ENCODE measurements at regions of chr21 and their contacts with region 1.

Region 1: DNA sequence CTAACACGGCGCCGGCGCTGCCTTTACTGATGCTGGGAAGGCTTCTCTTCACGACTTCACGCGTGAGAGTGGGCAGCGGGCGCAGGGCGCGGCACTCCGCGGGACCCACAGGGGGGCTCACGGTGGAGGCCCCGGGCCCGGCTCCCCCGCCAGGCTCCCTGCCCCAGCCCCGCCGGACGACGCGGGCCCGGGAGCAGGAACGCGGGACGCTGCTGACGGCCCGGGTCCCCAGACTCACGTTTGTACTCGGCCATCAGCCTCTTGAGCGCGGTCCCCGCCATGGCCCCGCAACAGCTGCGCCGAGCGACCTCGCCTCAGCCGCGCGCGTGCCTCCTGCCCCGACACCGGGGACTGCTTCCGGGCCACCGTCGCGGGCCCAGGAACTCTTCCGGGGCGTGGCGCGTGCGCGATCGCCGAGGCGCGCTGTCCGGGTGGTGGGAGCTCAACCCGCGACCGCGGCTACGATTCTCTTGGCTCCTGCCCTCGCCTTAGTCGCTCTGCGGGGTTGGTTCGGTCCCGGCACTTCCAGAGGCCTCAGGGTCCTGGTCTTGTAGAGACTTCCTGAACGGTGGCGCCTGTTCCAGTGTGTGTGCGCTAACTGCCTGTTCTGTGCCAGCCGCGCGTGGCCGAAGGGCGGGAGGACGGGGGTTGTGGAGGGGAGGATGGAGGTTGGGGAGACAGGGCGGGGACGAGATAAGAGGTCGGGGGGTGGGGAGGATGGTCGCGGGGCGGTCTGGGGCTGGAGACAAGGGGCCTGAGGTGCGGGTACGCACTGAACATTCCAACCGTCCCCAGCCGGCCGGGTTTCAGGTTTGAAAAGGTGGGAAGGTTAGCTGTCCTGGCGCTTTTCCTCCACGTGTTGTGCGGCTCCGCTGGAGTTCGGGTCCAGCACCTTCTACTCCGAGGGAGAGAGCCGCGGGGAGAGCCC is at the start of gene UBE2G2:
- DNase-seq: peak; percentile 79 to 95 (median 88)
- ATAC-seq: peak; percentile 95
- H3K4me3 ChIP-seq: peak within 1 kb of the TSS; percentile 92
- H3K4me3 Mint-ChIP-seq: peak within 1 kb of the TSS; percentile 88 to 100 (median 96)
- H3K27ac ChIP-seq: peak within 1 kb of the TSS; percentile 85
- H3K27ac Mint-ChIP-seq: peak within 1 kb of the TSS; percentile 85 to 99 (median 94)
- H3K4me1 ChIP-seq: peaks cover 19 to 27% of the 10 kb centered on the region in 2 donors
- H3K4me1 Mint-ChIP-seq: peaks cover 24 to 53% (median 45%) of the 10 kb centered on the region in 7 donors
- H3K27me3 ChIP-seq: no peaks in the 10 kb centered on the region
- H3K27me3 Mint-ChIP-seq: no peaks in the 10 kb centered on the region
- total RNA-seq, gene UBE2G2: 108 to 150 (median 129) TPM

Region 2: DNA sequence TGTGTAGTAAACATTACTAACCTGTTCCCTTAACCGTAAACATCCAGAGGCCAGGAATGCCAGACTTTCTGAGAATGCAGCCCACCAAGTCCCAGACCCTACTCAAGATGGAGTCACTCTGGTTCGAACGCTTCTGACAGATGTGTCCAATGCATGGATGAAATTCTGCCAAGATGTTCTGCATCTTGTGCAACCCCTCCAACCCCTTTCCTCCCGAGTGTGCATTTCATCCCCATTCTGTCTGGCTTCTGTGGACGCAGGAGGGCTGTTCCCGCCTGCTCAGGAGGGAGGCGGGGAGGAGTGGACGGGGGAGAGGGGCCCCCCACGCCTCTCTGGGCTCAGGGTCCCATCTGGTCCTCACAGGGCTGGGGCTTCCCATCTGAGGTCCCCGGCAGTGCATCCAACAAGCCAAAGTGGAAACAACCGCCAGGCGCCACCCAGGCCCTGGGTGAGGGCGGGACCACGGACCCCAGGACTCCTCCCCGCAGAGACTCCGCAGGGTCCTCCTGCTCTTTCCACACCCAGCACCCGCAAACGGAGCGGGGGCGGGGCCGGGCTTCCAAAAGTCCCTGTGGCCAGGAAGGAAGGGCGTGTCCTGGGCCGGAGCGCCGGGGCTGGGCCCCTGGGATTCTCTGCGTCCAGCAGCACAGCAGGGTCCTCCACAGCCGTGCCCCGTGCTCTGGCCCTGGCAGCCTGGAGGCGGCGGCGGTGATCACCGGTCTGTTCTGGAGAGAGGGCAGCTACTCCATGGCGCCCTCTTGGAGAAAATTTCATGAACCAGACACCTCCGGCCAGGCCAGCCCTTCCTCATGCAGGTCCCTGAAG is 43.9 kb after region 1 on chr21:
- CTCF ChIA-PET with region 1: interaction called, 4 read pairs
- POLR2A ChIA-PET with region 1: no interaction called
- intact Hi-C with region 1: loop called (anchors 1 kb)
- DNase-seq: peak; percentile 15 to 75 (median 37)
- ATAC-seq: peak; percentile 77
- H3K4me3 ChIP-seq: peak overlapping the region; percentile 51
- H3K4me3 Mint-ChIP-seq: peak overlapping the region; percentile 65 to 80 (median 78)
- H3K27ac ChIP-seq: peak overlapping the region; percentile 58
- H3K27ac Mint-ChIP-seq: peak overlapping the region; percentile 57 to 90 (median 76)
- H3K4me1 ChIP-seq: peaks cover 6 to 11% of the 10 kb centered on the region in 2 donors
- H3K4me1 Mint-ChIP-seq: peaks cover 3 to 24% (median 13%) of the 10 kb centered on the region in 7 donors
- H3K27me3 ChIP-seq: no peaks in the 10 kb centered on the region
- H3K27me3 Mint-ChIP-seq: peaks cover 0 to 4% (median 0%) of the 10 kb centered on the region in 5 donors

Region 3: GRCh38 chr21:44856136-44856535 is 54.4 kb after region 1 on chr21:
- CTCF ChIA-PET with region 1: no interaction called
- POLR2A ChIA-PET with region 1: no interaction called
- intact Hi-C with region 1: no loop called
- DNase-seq: no peak
- ATAC-seq: no peak
- H3K4me3 ChIP-seq: no peak overlapping the region
- H3K4me3 Mint-ChIP-seq: peak overlapping the region in 3 of 10 donors; percentile 8 to 66 (median 58)
- H3K27ac ChIP-seq: no peak overlapping the region
- H3K27ac Mint-ChIP-seq: peak overlapping the region in 5 of 9 donors; percentile 55 to 92 (median 75)
- H3K4me1 ChIP-seq: peaks cover 0 to 39% of the 10 kb centered on the region in 2 donors
- H3K4me1 Mint-ChIP-seq: peaks cover 36 to 72% (median 59%) of the 10 kb centered on the region in 7 donors
- H3K27me3 ChIP-seq: no peaks in the 10 kb centered on the region
- H3K27me3 Mint-ChIP-seq: no peaks in the 10 kb centered on the region

Region 4: DNA sequence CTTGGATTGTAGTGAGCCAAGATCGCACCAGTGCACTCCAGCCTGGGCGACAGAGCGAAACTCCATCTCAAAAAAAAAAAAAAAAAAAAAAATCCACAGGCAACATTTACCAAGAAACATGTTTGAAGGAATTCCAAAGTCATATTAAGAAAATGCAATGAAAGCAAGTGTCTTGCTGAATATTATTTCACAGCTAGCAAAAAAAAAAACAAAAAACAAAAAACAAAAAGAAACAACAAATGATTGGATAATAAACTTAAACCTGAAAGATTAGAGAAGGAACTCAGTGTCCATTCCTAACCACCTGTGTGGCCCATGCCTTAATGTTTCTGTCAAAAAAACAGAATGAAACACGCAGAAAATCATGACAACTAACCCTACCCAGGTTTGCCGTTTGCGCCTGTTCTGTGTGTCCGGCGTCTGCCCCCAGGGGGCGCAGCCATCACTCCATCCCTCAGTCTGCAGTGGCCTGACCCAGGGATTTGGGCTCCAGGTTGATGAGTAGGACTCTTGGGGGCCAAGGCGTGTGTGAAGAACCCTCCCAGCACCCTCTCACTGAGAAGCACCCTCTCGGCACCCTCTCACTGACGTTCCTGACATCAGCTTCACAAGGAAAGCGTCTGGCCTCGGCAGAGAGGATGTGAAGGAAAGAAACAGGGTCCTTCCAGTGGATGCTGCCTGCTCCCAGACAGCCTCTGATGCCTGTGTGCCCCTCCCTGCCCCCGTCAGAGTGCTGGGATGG is 91.0 kb after region 1 on chr21:
- CTCF ChIA-PET with region 1: interaction called, 4 read pairs
- POLR2A ChIA-PET with region 1: interaction called, 5 read pairs
- intact Hi-C with region 1: loop called (anchors 1 to 5 kb)
- DNase-seq: peak; percentile 59 to 80 (median 76)
- ATAC-seq: peak; percentile 82
- H3K4me3 ChIP-seq: no peak overlapping the region
- H3K4me3 Mint-ChIP-seq: no peak overlapping the region
- H3K27ac ChIP-seq: peak overlapping the region; percentile 21
- H3K27ac Mint-ChIP-seq: peak overlapping the region in 8 of 9 donors; percentile 61 to 89 (median 79)
- H3K4me1 ChIP-seq: peaks cover 7 to 11% of the 10 kb centered on the region in 2 donors
- H3K4me1 Mint-ChIP-seq: peaks cover 13 to 22% (median 16%) of the 10 kb centered on the region in 7 donors
- H3K27me3 ChIP-seq: no peaks in the 10 kb centered on the region
- H3K27me3 Mint-ChIP-seq: no peaks in the 10 kb centered on the region

Region 5: DNA sequence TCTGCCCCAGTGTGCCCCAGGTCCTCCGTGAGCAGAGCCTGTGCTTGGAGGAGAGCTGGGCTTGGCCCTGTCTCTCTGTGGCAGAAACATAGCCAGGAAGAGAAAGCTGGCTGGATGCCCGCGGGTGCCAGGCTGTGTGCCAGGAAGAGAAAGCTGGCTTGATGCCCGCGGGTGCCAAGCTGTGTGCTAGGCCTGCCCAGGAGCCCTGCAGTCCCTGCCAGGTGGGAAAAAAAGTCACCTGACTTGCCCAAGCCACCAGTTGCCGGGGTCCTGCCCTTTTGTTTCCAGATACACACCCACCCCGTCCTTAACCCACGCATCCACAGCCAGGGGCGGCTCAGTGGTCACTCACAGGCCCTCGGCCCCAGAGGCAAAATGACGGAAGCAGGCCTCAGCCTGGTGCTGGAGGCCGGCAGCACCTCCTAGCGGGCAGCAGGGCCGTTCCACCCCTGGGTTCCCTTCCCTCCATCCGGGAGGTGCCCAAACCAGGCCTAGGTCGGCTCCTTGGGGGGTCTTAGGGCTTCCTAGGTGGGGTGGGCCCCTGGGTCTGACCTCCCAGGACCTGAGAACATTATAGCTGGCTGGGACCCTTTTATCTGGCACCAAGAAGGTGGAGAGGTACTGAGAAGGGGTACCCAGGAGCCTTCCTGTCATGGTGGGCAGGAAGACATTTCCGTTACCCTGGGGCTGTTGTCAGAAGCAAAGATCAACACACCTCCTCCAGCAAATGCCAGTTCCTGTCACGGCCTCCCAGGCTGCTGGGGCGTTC is 109.8 kb after region 1 on chr21:
- CTCF ChIA-PET with region 1: interaction called, 3 read pairs
- POLR2A ChIA-PET with region 1: interaction called, 8 read pairs
- intact Hi-C with region 1: loop called in 1 of 2 experiments (anchors 1 kb)
- DNase-seq: peak; percentile 47 to 82 (median 78)
- ATAC-seq: peak; percentile 76
- H3K4me3 ChIP-seq: peak overlapping the region; percentile 49
- H3K4me3 Mint-ChIP-seq: peak overlapping the region; percentile 67 to 91 (median 82)
- H3K27ac ChIP-seq: peak overlapping the region; percentile 80
- H3K27ac Mint-ChIP-seq: peak overlapping the region; percentile 74 to 98 (median 93)
- H3K4me1 ChIP-seq: peaks cover 59 to 83% of the 10 kb centered on the region in 2 donors
- H3K4me1 Mint-ChIP-seq: peaks cover 53 to 86% (median 64%) of the 10 kb centered on the region in 7 donors
- H3K27me3 ChIP-seq: no peaks in the 10 kb centered on the region
- H3K27me3 Mint-ChIP-seq: no peaks in the 10 kb centered on the region

Region 6: DNA sequence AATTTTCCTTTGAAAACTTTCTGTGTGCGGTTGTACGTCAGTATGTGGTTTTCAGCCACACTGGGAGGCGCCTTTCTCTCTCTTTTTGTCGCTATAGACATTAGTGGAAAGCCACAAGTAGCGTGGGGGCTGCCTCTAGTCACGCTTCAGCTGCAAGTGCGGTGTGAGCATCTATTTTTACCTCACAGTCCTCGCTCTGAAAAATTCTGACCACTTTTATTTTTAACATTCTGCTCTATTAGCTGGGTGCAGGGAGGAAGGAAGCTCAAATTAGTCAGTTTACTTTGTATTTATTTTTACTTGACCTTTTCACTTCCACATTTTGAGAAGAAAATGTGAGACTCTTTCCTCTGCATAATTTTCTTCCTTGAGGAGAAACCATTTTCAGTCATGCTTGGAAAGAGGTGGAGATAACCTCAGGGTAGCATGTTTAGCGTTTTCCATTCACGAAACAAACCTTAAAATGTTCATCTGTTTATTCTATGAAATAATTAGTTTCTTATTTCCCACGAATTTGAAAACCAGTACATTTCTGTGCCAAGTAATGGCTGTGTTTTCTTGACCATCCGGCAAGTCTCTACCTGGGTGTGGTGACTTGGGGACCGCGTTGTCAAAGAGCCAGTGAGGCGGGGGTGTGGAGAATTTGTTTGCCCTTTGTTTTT is 308.2 kb after region 1 on chr21:
- CTCF ChIA-PET with region 1: no interaction called
- POLR2A ChIA-PET with region 1: no interaction called
- intact Hi-C with region 1: loop called in 1 of 2 experiments (anchors 10 kb)
- DNase-seq: peak in 6 of 9 donors; percentile 33 to 49 (median 35)
- ATAC-seq: peak; percentile 77
- H3K4me3 ChIP-seq: peak overlapping the region; percentile 29
- H3K4me3 Mint-ChIP-seq: peak overlapping the region; percentile 69 to 88 (median 81)
- H3K27ac ChIP-seq: no peak overlapping the region
- H3K27ac Mint-ChIP-seq: peak overlapping the region in 8 of 9 donors; percentile 0 to 90 (median 66)
- H3K4me1 ChIP-seq: peaks cover 0 to 20% of the 10 kb centered on the region in 2 donors
- H3K4me1 Mint-ChIP-seq: peaks cover 49 to 82% (median 65%) of the 10 kb centered on the region in 7 donors
- H3K27me3 ChIP-seq: no peaks in the 10 kb centered on the region
- H3K27me3 Mint-ChIP-seq: no peaks in the 10 kb centered on the region

Region 7: GRCh38 chr21:45130324-45130774 is 328.6 kb after region 1 on chr21:
- CTCF ChIA-PET with region 1: interaction called, 3 read pairs
- POLR2A ChIA-PET with region 1: interaction called, 3 read pairs
- intact Hi-C with region 1: loop called in 1 of 2 experiments (anchors 2 kb)
- DNase-seq: no peak
- ATAC-seq: no peak
- H3K4me3 ChIP-seq: no peak overlapping the region
- H3K4me3 Mint-ChIP-seq: no peak overlapping the region
- H3K27ac ChIP-seq: no peak overlapping the region
- H3K27ac Mint-ChIP-seq: peak overlapping the region in 1 of 9 donors; percentile 33
- H3K4me1 ChIP-seq: peaks cover 0 to 7% of the 10 kb centered on the region in 2 donors
- H3K4me1 Mint-ChIP-seq: peaks cover 18 to 34% (median 27%) of the 10 kb centered on the region in 7 donors
- H3K27me3 ChIP-seq: no peaks in the 10 kb centered on the region
- H3K27me3 Mint-ChIP-seq: no peaks in the 10 kb centered on the region

Measured in naive thymus-derived CD4-positive, alpha-beta T cell (primary cell).